ENCODE measurements at regions of chrX and their contacts with region 1.

Region 1: GRCh38 chrX:6021316-6022091 is 207.2 kb downstream of the NLGN4X start:
- DNase-seq: peak in 5 of 14 experiments; percentile 3 to 27 (median 9)
- ATAC-seq: no peak
- H3K4me3 ChIP-seq: no peak overlapping the region
- H3K4me3 Mint-ChIP-seq: no peak overlapping the region
- H3K27ac ChIP-seq: no peak overlapping the region
- H3K27ac Mint-ChIP-seq: no peak overlapping the region
- H3K4me1 ChIP-seq: no peaks in the 10 kb centered on the region
- H3K4me1 Mint-ChIP-seq: peaks cover 10% of the 10 kb centered on the region
- H3K27me3 ChIP-seq: no peaks in the 10 kb centered on the region
- H3K27me3 Mint-ChIP-seq: no peaks in the 10 kb centered on the region
- CTCF ChIP-seq: peak; percentile 33

Region 2: DNA sequence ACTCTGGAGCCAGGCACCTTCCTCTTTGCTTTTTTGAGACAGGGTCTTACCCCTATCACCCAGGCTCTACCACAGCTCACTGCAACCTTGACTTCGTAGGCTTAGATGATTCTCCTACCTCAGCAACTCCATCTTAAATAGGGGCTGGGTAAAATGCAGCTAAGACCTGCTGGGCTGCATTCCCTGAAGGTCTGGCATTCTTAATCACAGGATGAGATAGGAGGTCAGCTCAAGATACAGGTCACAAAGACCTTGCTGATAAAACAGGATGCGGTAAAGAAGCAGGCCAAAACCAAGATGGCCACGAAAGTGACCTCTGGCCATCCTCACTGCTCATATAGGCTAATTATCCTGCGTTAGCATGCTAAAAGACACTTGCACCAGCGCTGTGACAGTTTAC is 1537.2 kb before region 1 on chrX:
- CTCF ChIA-PET with region 1: no interaction called
- POLR2A ChIA-PET with region 1: no interaction called
- intact Hi-C with region 1: no loop called
- DNase-seq: no peak
- ATAC-seq: no peak
- H3K4me3 ChIP-seq: no peak overlapping the region
- H3K4me3 Mint-ChIP-seq: no peak overlapping the region
- H3K27ac ChIP-seq: no peak overlapping the region
- H3K27ac Mint-ChIP-seq: no peak overlapping the region
- H3K4me1 ChIP-seq: no peaks in the 10 kb centered on the region
- H3K4me1 Mint-ChIP-seq: no peaks in the 10 kb centered on the region
- H3K27me3 ChIP-seq: no peaks in the 10 kb centered on the region
- H3K27me3 Mint-ChIP-seq: no peaks in the 10 kb centered on the region
- CTCF ChIP-seq: no peak

Region 3: GRCh38 chrX:5876984-5877596 is 144.4 kb before region 1 on chrX:
- CTCF ChIA-PET with region 1: no interaction called
- POLR2A ChIA-PET with region 1: no interaction called
- intact Hi-C with region 1: no loop called
- DNase-seq: peak in 1 of 14 experiments; percentile 1
- ATAC-seq: no peak
- H3K4me3 ChIP-seq: no peak overlapping the region
- H3K4me3 Mint-ChIP-seq: no peak overlapping the region
- H3K27ac ChIP-seq: no peak overlapping the region
- H3K27ac Mint-ChIP-seq: no peak overlapping the region
- H3K4me1 ChIP-seq: no peaks in the 10 kb centered on the region
- H3K4me1 Mint-ChIP-seq: no peaks in the 10 kb centered on the region
- H3K27me3 ChIP-seq: no peaks in the 10 kb centered on the region
- H3K27me3 Mint-ChIP-seq: no peaks in the 10 kb centered on the region
- CTCF ChIP-seq: no peak

Region 4: GRCh38 chrX:5976332-5976731 is 45.2 kb before region 1 on chrX:
- CTCF ChIA-PET with region 1: no interaction called
- POLR2A ChIA-PET with region 1: no interaction called
- intact Hi-C with region 1: no loop called
- DNase-seq: no peak
- ATAC-seq: no peak
- H3K4me3 ChIP-seq: no peak overlapping the region
- H3K4me3 Mint-ChIP-seq: no peak overlapping the region
- H3K27ac ChIP-seq: no peak overlapping the region
- H3K27ac Mint-ChIP-seq: no peak overlapping the region
- H3K4me1 ChIP-seq: no peaks in the 10 kb centered on the region
- H3K4me1 Mint-ChIP-seq: no peaks in the 10 kb centered on the region
- H3K27me3 ChIP-seq: no peaks in the 10 kb centered on the region
- H3K27me3 Mint-ChIP-seq: no peaks in the 10 kb centered on the region
- CTCF ChIP-seq: no peak

Region 5: DNA sequence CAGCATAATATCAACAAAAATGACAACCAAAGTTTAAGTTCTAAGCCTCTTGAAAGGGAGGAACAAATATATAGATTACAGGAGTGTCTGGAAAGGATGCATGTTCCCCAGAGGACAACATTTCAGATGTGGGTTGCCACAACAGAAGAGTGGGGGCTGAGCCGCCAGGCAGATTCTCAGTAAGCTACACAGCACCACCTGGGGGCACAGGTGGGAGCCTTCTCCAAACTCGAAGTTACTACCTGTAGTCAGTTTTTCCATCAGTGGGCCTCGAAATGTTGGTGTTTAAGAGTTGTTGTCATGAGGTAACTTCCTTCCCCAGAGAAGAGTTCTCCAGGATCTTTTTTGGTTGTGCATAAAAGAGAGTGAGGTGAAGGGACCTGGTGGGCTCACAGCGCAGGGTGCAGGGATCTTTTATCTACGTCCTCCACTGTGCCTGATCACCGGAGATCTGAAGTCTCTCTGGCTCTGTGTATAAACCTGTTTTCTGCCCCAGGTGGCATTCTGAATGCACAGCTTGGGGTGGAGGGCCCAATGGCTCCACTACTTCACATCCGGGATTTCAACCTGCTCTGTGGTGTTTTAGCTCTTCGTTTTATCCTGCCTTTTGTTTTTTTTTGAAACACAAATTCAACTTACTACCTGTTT is 1067.6 kb after region 1 on chrX:
- CTCF ChIA-PET with region 1: no interaction called
- POLR2A ChIA-PET with region 1: no interaction called
- intact Hi-C with region 1: loop called in 1 of 2 experiments (anchors 5 kb)
- DNase-seq: peak; percentile 5 to 74 (median 40)
- ATAC-seq: peak; percentile 59
- H3K4me3 ChIP-seq: no peak overlapping the region
- H3K4me3 Mint-ChIP-seq: peak overlapping the region; percentile 16
- H3K27ac ChIP-seq: no peak overlapping the region
- H3K27ac Mint-ChIP-seq: peak overlapping the region; percentile 24
- H3K4me1 ChIP-seq: peaks cover 22% of the 10 kb centered on the region
- H3K4me1 Mint-ChIP-seq: peaks cover 47% of the 10 kb centered on the region
- H3K27me3 ChIP-seq: no peaks in the 10 kb centered on the region
- H3K27me3 Mint-ChIP-seq: no peaks in the 10 kb centered on the region
- CTCF ChIP-seq: peak; percentile 59

Region 6: GRCh38 chrX:7925867-7926472 is 1904.5 kb after region 1 on chrX:
- CTCF ChIA-PET with region 1: no interaction called
- POLR2A ChIA-PET with region 1: no interaction called
- intact Hi-C with region 1: loop called in 1 of 2 experiments (anchors 5 kb)
- DNase-seq: peak; percentile 30 to 78 (median 44)
- ATAC-seq: peak; percentile 55
- H3K4me3 ChIP-seq: no peak overlapping the region
- H3K4me3 Mint-ChIP-seq: peak overlapping the region; percentile 81
- H3K27ac ChIP-seq: no peak overlapping the region
- H3K27ac Mint-ChIP-seq: peak overlapping the region; percentile 94
- H3K4me1 ChIP-seq: peaks cover 13% of the 10 kb centered on the region
- H3K4me1 Mint-ChIP-seq: peaks cover 18% of the 10 kb centered on the region
- H3K27me3 ChIP-seq: no peaks in the 10 kb centered on the region
- H3K27me3 Mint-ChIP-seq: peaks cover 4% of the 10 kb centered on the region
- CTCF ChIP-seq: peak; percentile 58

Region 7: GRCh38 chrX:7941390-7942042 is 1920.0 kb after region 1 on chrX:
- CTCF ChIA-PET with region 1: no interaction called
- POLR2A ChIA-PET with region 1: no interaction called
- intact Hi-C with region 1: loop called in 1 of 2 experiments (anchors 5 kb)
- DNase-seq: peak in 2 of 14 experiments; percentile 5 to 8
- ATAC-seq: no peak
- H3K4me3 ChIP-seq: no peak overlapping the region
- H3K4me3 Mint-ChIP-seq: no peak overlapping the region
- H3K27ac ChIP-seq: no peak overlapping the region
- H3K27ac Mint-ChIP-seq: no peak overlapping the region
- H3K4me1 ChIP-seq: no peaks in the 10 kb centered on the region
- H3K4me1 Mint-ChIP-seq: no peaks in the 10 kb centered on the region
- H3K27me3 ChIP-seq: no peaks in the 10 kb centered on the region
- H3K27me3 Mint-ChIP-seq: no peaks in the 10 kb centered on the region
- CTCF ChIP-seq: no peak